Mucosa of descending colon (tissue), 3 donors: ENCODE measurements at regions of chr22 and their contacts with region 1.

Region 1: GRCh38 chr22:36123673-36124630 is 36.6 kb downstream of the APOL3 start:
- DNase-seq: peak; percentile 96 to 97 (median 96)
- ATAC-seq: peak; percentile 99
- H3K4me3 ChIP-seq: no peak overlapping the region
- H3K4me1 ChIP-seq: no peaks in the 10 kb centered on the region
- CTCF ChIP-seq: peak; percentile 97

Region 2: GRCh38 chr22:35627264-35628041 is 496.5 kb before region 1 on chr22:
- intact Hi-C with region 1: loop called in 1 of 2 experiments (anchors 10 kb)
- DNase-seq: peak; percentile 83 to 92 (median 89)
- ATAC-seq: peak; percentile 86
- H3K4me3 ChIP-seq: peak overlapping the region; percentile 18
- H3K4me1 ChIP-seq: peaks cover 4% of the 10 kb centered on the region
- CTCF ChIP-seq: no peak

Region 3: GRCh38 chr22:35930933-35931332 is 193.0 kb before region 1 on chr22:
- intact Hi-C with region 1: loop called (anchors 2 to 5 kb)
- DNase-seq: peak in 1 of 3 donors; percentile 37
- ATAC-seq: peak; percentile 77
- H3K4me3 ChIP-seq: no peak overlapping the region
- H3K4me1 ChIP-seq: no peaks in the 10 kb centered on the region
- CTCF ChIP-seq: no peak

Region 4: GRCh38 chr22:36077271-36077670 is 46.7 kb before region 1 on chr22:
- intact Hi-C with region 1: loop called in 1 of 2 experiments (anchors 10 kb)
- DNase-seq: no peak
- ATAC-seq: no peak
- H3K4me3 ChIP-seq: no peak overlapping the region
- H3K4me1 ChIP-seq: no peaks in the 10 kb centered on the region
- CTCF ChIP-seq: no peak

Region 5: DNA sequence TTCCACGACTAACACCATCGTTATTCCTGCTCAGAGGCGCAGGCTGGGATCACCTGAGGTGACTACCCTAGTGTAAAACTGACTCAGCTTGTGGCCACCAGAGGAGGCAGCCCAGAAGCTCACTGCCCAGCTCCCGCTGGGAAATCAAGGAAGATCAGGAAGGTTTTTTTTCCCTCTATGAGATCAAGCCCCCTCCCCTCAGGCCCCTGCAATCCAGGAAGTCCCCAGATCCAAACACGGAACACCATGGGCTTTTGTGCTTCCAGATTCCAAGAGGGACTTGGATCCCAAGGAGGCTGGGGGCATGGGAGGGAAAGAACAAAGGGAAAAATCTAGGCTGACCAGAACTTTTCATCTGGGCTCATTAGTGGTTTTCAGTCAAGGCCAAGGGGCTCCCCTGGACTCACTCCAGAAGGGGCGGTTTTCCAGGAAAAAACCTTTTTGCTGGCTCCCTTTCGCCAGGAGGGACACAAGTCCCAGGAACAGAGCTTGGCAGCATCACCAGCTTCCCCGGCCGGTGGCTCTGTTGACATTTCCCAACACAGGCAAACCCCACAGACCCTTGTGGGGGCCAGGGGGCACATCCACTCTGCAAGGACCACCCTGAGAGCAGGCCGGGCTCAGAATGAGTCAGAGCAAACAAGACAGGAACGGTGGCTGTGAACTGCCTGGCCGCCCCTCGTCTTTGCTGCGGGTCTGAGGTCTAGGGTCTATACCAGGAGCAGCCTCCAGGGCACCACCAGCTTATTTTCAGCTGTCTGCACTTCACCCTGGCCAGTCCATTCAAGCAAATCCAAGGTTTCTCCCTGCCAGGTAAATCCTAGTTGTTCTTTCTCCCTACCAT is 227.0 kb after region 1 on chr22:
- intact Hi-C with region 1: no loop called
- DNase-seq: no peak
- ATAC-seq: peak; percentile 5
- H3K4me3 ChIP-seq: no peak overlapping the region
- H3K4me1 ChIP-seq: peaks cover 41% of the 10 kb centered on the region
- CTCF ChIP-seq: no peak